Cardiac septum (tissue), 1 donor: ENCODE measurements at regions of chr20 and their contacts with region 1.

Region 1: DNA sequence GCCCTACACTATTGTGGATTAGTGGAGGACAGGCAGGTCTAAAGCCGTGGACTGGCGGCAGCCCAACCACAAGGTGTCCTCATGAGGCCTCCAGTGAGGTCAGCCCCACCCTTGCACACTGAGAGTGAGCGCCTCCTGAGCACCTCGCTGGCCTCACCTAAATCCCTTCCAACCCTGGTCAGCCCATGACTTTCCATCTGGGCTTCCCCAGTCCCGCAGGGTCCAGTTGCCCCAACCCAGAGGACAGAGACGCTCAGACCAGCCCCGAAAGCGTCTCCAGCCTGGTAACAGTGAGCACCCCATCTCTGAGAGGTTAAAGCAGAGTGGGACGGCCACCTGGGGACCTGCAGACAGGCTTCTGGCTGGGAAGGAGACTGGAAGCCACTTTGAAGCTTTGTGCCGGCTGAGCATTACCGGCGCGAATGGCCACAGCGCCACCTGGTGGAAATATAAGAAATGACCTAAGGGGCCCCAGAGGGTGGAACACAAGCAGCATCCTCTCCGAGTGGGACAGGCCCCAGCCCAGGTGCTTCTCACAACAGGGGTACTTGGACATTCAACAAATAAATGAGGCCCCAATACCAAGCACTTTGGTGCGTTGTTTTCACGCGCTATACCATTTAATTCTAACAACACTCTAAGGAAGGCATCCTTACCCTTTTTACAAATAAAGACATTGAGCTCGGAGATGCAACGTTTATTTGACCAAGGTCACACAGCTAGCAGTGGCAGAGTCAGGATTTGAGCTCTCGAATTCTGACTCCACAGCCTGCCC is 65.7 kb upstream of the TOP1 start:
- DNase-seq: peak; percentile 82

Region 2: DNA sequence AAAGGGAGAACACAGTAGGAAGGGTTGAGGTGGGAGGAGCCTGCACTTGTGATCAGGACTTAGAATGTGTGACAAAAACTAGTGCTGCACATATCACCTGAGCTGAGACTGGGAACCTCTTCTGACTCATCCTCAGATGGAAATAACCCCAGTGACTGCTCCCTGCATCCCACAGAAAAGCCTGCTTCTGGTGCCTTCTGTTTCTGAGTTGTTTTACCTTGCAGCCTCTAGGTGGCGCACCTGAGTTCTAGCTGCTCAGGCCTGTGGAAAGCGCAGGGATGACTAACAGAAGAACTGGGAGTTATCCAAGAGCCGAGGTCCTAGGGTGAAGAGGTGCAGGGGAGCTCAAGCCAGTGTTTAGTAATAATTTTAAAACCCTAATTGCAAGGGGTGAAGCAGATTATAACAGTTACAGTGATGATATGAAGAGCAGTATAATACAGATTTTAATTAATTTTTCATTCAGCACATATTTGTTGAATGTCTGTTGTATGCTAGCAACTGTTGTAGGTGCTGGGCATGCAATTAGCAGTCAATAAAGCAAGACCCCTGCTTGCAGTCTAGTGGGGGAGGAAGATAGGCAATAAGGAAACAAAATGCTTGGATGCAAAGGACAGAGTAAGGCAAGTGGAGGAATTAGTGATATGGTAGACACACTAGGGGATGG is 1698.3 kb before region 1 on chr20:
- intact Hi-C with region 1: loop called (anchors 10 kb)
- DNase-seq: no peak

Region 3: GRCh38 chr20:39885975-39886649 is 1076.8 kb before region 1 on chr20:
- intact Hi-C with region 1: loop called (anchors 10 kb)
- DNase-seq: no peak

Region 4: GRCh38 chr20:40741507-40742106 is 221.3 kb before region 1 on chr20:
- intact Hi-C with region 1: loop called (anchors 5 kb)
- DNase-seq: no peak

Region 5: DNA sequence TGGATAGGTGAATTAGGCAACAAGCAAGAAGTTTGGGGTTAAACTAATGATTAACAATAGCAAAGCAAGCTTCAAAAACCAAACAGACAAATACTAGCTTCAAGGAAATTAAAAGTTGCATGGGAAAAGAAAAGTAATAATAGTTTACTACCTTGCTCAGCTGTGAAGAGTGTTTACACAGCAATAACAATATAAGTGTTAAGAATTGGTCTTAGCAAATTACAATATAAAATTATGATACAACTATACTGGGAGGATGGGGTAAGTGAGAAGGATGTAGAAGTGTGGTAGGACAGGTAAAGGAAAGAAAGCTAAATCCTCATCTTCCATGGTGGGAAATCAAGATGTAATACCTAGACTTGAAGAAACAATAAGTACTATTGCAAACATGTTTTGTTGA is 136.2 kb before region 1 on chr20:
- intact Hi-C with region 1: no loop called
- DNase-seq: no peak

Region 6: DNA sequence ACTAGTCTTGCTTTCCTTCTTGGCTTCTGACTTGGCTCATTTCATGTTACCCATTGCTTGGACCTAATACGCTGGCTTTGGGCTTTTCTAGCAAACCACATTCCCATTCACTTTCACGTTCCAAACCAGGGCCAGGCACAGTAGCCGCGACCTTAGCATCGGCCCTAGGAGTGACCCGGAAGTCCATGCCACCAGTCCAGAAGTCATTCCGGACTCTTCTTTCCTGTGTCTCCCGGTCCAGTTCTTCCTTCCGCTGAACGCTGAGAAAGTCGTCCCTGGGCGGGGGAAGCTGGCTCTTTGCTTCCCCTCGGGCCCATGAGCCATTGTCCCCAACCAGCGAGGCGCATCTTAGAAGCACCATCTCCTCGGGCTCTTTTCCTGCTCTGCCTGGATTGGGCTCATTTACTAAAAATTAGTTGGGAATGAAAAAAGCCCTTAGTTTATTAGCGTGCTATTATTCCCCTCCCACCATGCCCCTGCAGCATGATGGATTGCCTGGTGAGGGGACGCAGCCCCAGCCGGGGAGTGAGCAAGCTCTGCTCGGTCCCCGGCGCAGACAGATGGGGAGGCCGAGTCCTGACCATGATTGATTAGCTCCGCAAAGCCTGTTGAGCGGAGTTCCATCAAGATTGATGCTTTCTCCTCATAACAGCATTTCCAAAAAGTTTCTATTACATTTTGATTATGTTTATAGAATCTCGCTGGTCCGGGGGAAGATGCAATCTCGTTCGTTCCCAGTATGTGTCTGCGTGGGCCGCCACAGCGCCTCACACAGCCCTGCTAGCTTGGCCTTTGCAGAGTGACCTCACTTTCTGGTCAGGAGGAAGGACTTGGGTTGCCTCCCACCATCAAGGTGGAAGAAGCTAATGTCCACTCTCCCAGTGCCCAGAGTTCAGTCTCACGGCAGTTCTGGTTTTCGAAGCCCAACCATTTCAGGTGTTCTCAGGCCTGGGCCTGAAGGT is 49.4 kb before region 1 on chr20:
- intact Hi-C with region 1: no loop called
- DNase-seq: no peak

Region 7: DNA sequence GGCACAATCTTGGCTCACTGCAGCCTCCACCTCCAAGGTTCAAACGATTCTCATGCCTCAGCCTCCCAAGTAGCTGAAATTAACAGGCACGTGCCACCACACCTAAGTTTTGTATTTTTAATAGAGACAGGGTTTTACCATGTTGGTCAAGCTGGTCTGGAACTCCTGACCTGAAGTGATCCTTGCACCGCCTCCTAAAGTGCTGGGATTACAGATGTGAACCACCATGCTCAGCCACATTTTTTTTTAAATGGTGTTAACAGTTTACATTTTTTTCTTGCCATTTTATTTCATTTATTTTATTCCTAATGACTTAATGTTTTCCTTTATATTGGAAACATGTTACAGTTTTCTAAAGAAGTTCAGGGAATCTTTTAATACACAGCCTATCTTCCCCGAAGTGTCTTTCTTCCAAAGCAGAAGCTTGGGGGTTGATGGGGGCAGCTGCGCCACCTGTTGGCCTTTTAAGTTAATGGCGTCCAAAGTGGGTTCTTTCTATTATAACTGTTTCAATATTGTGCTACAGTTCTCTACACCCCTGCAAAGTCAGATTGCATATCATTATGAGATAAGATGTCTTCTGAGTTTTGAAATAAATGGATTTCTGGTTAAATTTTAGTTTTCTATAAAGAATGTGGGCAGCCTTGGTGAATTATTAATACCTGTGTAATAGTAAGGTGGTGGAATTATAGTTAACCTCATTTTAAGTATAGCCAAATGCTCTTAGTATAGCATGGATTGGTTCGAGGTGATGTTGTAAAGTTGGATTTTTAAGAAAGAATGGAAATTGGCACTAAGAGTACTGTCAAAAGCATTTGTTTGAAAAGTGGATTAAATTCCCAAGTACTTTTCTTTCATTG is 132.4 kb after region 1 on chr20:
- intact Hi-C with region 1: loop called (anchors 2 kb)
- DNase-seq: peak; percentile 79